Activated T-helper 2 cell treated with anti-CD3 and anti-CD28 coated beads, Interferon-gamma antibody, Interleukin-2, Interleukin-4, amounts not matched to agents 10 μg/mL and 5 μg/mL and 100 μg/mL, durations not matched to agents 14 hours and 24 hours and 36 hours (primary cell): ENCODE measurements at regions of chr4 and their contacts with region 1.

Region 1: DNA sequence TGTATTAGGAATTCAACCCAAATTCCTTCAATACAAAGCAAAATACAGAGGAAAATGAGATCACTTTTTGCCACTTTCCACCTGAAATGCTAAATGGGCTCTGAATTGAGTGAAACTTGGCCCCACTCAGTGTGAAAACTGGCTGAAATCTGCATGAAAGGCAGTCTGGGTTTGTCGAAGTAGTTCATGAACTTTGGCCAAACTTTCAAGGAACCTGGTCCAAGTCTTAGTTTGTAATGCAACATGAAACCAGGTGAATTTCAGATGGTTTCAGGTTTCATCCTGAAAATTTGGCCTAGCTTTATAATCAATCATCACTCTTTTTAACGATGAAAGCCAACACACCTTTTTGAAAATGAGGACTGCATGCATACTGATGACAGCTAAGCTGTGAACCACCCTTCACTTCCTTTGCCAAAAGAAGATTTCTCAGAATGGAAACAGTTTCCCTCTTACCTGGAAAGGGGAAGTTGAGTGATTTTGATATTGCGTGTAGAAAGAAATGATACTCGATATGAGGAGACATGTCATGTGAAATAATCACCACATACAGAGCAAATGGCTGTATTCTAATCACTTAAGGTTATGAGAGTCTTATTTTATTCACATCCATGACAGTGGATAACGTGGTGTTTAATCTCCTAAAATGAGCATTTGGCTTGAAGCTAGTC is 209.9 kb upstream of the ETNPPL start:
- DNase-seq: no peak
- H3K4me3 Mint-ChIP-seq: peak overlapping the region; percentile 54
- H3K27ac Mint-ChIP-seq: peak overlapping the region; percentile 92
- H3K4me1 Mint-ChIP-seq: peaks cover 43% of the 10 kb centered on the region
- H3K27me3 Mint-ChIP-seq: no peaks in the 10 kb centered on the region

Region 2: GRCh38 chr4:108570993-108571569 is 401.7 kb before region 1 on chr4:
- intact Hi-C with region 1: no loop called
- DNase-seq: no peak
- H3K4me3 Mint-ChIP-seq: no peak overlapping the region
- H3K27ac Mint-ChIP-seq: no peak overlapping the region
- H3K4me1 Mint-ChIP-seq: peaks cover 5% of the 10 kb centered on the region
- H3K27me3 Mint-ChIP-seq: no peaks in the 10 kb centered on the region

Region 3: DNA sequence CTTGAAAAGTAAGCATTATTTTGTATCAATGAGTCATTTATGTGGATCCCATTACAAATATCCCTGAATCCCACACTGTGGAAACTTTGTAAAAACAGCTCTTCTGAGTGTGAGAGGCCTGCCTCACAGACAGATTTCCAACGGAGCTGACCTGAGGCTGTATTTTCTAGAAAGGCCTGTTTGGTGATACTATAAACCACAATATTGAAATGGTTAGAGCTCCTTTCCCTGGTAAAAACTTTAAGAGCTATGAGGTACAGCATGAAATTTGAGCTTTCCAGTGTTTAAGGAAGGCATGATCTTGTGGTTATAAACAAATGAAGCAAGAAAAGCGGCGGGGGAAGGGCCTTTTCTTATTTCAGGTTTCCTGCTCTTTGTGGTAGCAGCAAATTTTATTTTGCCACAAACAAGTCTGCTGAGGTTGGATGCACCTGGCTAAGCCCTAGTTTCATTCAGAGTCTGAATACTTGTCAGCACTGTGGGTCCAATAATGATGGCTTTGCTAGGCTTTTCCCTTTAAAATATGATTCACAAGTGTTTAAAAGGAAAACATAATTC is 123.1 kb before region 1 on chr4:
- intact Hi-C with region 1: loop called (anchors 10 kb)
- DNase-seq: no peak
- H3K4me3 Mint-ChIP-seq: no peak overlapping the region
- H3K27ac Mint-ChIP-seq: peak overlapping the region; percentile 60
- H3K4me1 Mint-ChIP-seq: peaks cover 40% of the 10 kb centered on the region
- H3K27me3 Mint-ChIP-seq: no peaks in the 10 kb centered on the region

Region 4: GRCh38 chr4:108988464-108989195 is 15.9 kb after region 1 on chr4:
- intact Hi-C with region 1: loop called (anchors 1 kb)
- DNase-seq: no peak
- H3K4me3 Mint-ChIP-seq: no peak overlapping the region
- H3K27ac Mint-ChIP-seq: no peak overlapping the region
- H3K4me1 Mint-ChIP-seq: no peaks in the 10 kb centered on the region
- H3K27me3 Mint-ChIP-seq: no peaks in the 10 kb centered on the region

Region 5: DNA sequence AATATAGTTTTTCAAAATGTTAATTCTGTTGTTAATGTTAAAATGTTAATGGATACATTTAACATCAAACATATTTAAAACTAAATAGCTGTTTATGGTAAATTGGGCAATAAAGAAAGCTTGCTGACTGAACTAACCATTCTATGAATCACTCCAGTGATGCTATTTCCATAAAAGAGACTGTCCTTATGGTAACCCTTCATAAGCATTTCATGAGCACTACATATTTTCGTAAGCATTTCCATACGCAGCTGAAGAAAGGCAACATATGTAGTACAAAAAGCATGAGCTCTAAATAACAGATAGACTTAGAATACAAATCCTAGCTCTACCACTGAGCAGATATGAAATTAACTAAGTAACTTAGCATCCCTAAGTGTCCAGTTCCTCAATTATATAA is 140.8 kb after region 1 on chr4:
- intact Hi-C with region 1: no loop called
- DNase-seq: no peak
- H3K4me3 Mint-ChIP-seq: no peak overlapping the region
- H3K27ac Mint-ChIP-seq: no peak overlapping the region
- H3K4me1 Mint-ChIP-seq: no peaks in the 10 kb centered on the region
- H3K27me3 Mint-ChIP-seq: peaks cover 21% of the 10 kb centered on the region

Region 6: GRCh38 chr4:109359040-109359646 is 386.4 kb after region 1 on chr4:
- intact Hi-C with region 1: loop called (anchors 2 kb)
- DNase-seq: peak; percentile 52
- H3K4me3 Mint-ChIP-seq: peak overlapping the region; percentile 14
- H3K27ac Mint-ChIP-seq: peak overlapping the region; percentile 80
- H3K4me1 Mint-ChIP-seq: peaks cover 37% of the 10 kb centered on the region
- H3K27me3 Mint-ChIP-seq: peaks cover 31% of the 10 kb centered on the region